CD4-positive, alpha-beta memory T cell (primary cell): ENCODE measurements at regions of chr7 and their contacts with region 1.

Region 1: DNA sequence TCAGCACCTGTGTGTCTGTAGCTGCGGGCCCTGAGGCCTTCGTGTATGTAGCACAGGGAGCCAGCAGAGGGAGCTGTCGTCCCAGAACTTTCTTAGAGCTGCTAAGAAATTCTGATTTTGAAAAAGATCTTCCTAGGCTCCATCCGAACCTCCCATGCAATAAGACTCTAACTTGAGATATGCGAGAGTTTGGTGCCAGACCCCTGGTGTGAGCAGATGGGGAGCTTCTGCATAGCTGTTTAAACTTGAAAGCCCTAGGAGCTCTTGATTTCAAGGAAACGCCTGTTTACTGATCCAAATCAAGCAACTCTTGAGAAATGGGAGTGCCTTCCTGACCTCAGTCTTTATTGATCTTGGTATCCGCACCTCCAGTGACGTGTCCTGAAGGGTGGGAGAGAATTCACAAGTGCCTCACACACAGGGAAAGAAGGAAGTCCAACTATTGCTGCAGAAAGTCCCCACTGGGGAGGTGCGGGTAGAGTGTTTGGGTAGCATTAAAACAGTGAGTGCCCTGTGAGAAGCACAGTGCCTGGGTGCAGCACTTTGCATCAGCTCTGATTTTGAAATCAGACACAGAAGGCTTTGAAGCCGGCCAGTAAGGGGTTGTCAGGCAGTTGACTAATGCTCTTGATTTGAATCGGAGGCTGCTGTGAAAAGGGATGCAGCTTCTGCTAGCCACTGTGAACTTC is 66.4 kb upstream of the STRIP2 start:
- DNase-seq: peak; percentile 61 to 68 (median 68)
- H3K4me3 ChIP-seq: peak overlapping the region in 1 of 2 donors; percentile 32
- H3K4me3 Mint-ChIP-seq: peak overlapping the region; percentile 30 to 79 (median 63)
- H3K27ac ChIP-seq: peak overlapping the region; percentile 0
- H3K27ac Mint-ChIP-seq: peak overlapping the region in 4 of 7 donors; percentile 9 to 78 (median 56)
- H3K4me1 ChIP-seq: peaks cover 17% of the 10 kb centered on the region
- H3K4me1 Mint-ChIP-seq: peaks cover 13 to 20% (median 16%) of the 10 kb centered on the region in 4 donors
- H3K27me3 ChIP-seq: no peaks in the 10 kb centered on the region
- H3K27me3 Mint-ChIP-seq: no peaks in the 10 kb centered on the region

Region 2: GRCh38 chr7:129343099-129343700 is 24.6 kb before region 1 on chr7:
- CTCF ChIA-PET with region 1: interaction called, 17 read pairs
- POLR2A ChIA-PET with region 1: no interaction called
- intact Hi-C with region 1: no loop called
- DNase-seq: peak in 4 of 5 donors; percentile 17 to 44 (median 34)
- H3K4me3 ChIP-seq: no peak overlapping the region
- H3K4me3 Mint-ChIP-seq: no peak overlapping the region
- H3K27ac ChIP-seq: no peak overlapping the region
- H3K27ac Mint-ChIP-seq: no peak overlapping the region
- H3K4me1 ChIP-seq: no peaks in the 10 kb centered on the region
- H3K4me1 Mint-ChIP-seq: peaks cover 9 to 12% (median 10%) of the 10 kb centered on the region in 4 donors
- H3K27me3 ChIP-seq: no peaks in the 10 kb centered on the region
- H3K27me3 Mint-ChIP-seq: no peaks in the 10 kb centered on the region

Region 3: GRCh38 chr7:129401967-129402860 is 34.4 kb after region 1 on chr7:
- CTCF ChIA-PET with region 1: interaction called, 10 read pairs
- POLR2A ChIA-PET with region 1: no interaction called
- intact Hi-C with region 1: no loop called
- DNase-seq: no peak
- H3K4me3 ChIP-seq: no peak overlapping the region
- H3K4me3 Mint-ChIP-seq: no peak overlapping the region
- H3K27ac ChIP-seq: no peak overlapping the region
- H3K27ac Mint-ChIP-seq: no peak overlapping the region
- H3K4me1 ChIP-seq: no peaks in the 10 kb centered on the region
- H3K4me1 Mint-ChIP-seq: no peaks in the 10 kb centered on the region
- H3K27me3 ChIP-seq: no peaks in the 10 kb centered on the region
- H3K27me3 Mint-ChIP-seq: no peaks in the 10 kb centered on the region

Region 4: GRCh38 chr7:129468087-129468486 is 100.2 kb after region 1 on chr7:
- CTCF ChIA-PET with region 1: interaction called, 136 read pairs
- POLR2A ChIA-PET with region 1: no interaction called
- intact Hi-C with region 1: loop called (anchors 1 kb)
- DNase-seq: no peak
- H3K4me3 ChIP-seq: no peak overlapping the region
- H3K4me3 Mint-ChIP-seq: no peak overlapping the region
- H3K27ac ChIP-seq: no peak overlapping the region
- H3K27ac Mint-ChIP-seq: no peak overlapping the region
- H3K4me1 ChIP-seq: no peaks in the 10 kb centered on the region
- H3K4me1 Mint-ChIP-seq: no peaks in the 10 kb centered on the region
- H3K27me3 ChIP-seq: no peaks in the 10 kb centered on the region
- H3K27me3 Mint-ChIP-seq: no peaks in the 10 kb centered on the region

Region 5: DNA sequence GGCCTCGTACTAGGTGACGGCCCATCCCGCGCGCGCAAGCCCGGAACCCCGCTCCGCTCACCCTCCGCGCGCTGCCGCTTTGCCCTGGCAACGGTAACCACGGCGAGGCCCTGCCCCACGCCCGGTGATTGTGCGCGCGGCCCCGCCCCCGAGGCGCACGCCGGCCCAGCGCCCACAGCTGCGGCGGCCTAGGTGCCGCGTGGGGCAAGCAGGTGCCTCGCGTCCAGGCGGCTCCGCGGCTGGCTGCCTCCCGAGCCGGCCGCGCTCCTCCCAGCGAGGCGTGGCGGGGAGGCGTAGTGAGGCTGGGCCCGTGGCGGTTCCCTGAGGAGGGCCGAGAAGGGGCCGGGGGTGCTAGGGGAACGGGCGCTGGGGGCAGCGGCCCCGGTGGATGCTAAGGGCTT is 134.5 kb after region 1 on chr7 and contains the start of gene SMKR1:
- CTCF ChIA-PET with region 1: no interaction called
- POLR2A ChIA-PET with region 1: no interaction called
- intact Hi-C with region 1: no loop called
- DNase-seq: peak; percentile 93 to 96 (median 96)
- H3K4me3 ChIP-seq: peak within 1 kb of the TSS; percentile 18 to 55
- H3K4me3 Mint-ChIP-seq: peak within 1 kb of the TSS; percentile 85 to 91 (median 88)
- H3K27ac ChIP-seq: peak within 1 kb of the TSS; percentile 66
- H3K27ac Mint-ChIP-seq: peak within 1 kb of the TSS; percentile 87 to 97 (median 93)
- H3K4me1 ChIP-seq: peaks cover 6% of the 10 kb centered on the region
- H3K4me1 Mint-ChIP-seq: peaks cover 6 to 18% (median 12%) of the 10 kb centered on the region in 4 donors
- H3K27me3 ChIP-seq: no peaks in the 10 kb centered on the region
- H3K27me3 Mint-ChIP-seq: no peaks in the 10 kb centered on the region
- total RNA-seq, gene SMKR1: 1.2 to 1.5 TPM

Region 6: GRCh38 chr7:129644634-129645230 is 276.9 kb after region 1 on chr7:
- CTCF ChIA-PET with region 1: interaction called, 8 read pairs
- POLR2A ChIA-PET with region 1: no interaction called
- intact Hi-C with region 1: loop called (anchors 2 kb)
- DNase-seq: peak in 1 of 5 donors; percentile 16
- H3K4me3 ChIP-seq: no peak overlapping the region
- H3K4me3 Mint-ChIP-seq: no peak overlapping the region
- H3K27ac ChIP-seq: no peak overlapping the region
- H3K27ac Mint-ChIP-seq: no peak overlapping the region
- H3K4me1 ChIP-seq: no peaks in the 10 kb centered on the region
- H3K4me1 Mint-ChIP-seq: peaks cover 19 to 33% (median 20%) of the 10 kb centered on the region in 4 donors
- H3K27me3 ChIP-seq: no peaks in the 10 kb centered on the region
- H3K27me3 Mint-ChIP-seq: no peaks in the 10 kb centered on the region

Region 7: DNA sequence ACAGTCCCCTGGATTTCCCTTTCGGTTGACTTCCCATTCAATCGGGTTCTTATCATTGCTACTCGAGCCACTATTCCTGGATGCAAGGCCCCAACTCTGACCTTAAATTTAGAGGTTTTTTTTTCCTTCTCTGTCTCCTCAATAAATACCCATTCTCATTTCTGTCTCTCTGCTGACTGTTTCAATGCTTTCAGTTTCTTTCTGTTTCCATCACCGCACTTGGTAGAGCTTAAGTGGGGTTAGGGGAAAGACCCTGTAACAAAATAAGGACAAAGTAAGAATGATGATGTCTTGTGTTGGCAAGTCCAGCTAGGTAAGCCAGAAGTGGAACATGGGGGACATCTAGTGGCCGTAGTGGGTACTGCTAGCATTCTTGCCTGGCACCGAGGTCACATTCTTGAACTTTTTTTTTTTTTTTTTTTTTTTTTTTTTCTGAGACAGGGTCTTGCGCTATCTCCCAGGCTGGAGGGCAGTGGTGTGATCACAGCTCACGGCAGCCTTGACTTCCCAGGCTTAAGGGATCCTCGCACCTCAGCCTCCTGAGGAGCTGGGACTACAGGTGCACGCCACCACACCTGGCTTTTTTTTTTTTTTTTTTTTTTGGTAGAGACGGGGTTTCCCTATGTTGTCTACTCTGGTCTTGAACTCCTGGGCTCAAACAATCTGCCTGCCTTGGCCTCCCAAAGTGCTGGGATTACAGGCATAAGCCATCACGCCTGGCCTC is 643.0 kb after region 1 on chr7:
- CTCF ChIA-PET with region 1: interaction called, 15 read pairs
- POLR2A ChIA-PET with region 1: interaction called, 3 read pairs
- intact Hi-C with region 1: loop called (anchors 1 kb)
- DNase-seq: peak; percentile 79 to 83 (median 80)
- H3K4me3 ChIP-seq: no peak overlapping the region
- H3K4me3 Mint-ChIP-seq: no peak overlapping the region
- H3K27ac ChIP-seq: no peak overlapping the region
- H3K27ac Mint-ChIP-seq: peak overlapping the region in 3 of 7 donors; percentile 62 to 74 (median 65)
- H3K4me1 ChIP-seq: no peaks in the 10 kb centered on the region
- H3K4me1 Mint-ChIP-seq: peaks cover 0 to 4% (median 2%) of the 10 kb centered on the region in 4 donors
- H3K27me3 ChIP-seq: no peaks in the 10 kb centered on the region
- H3K27me3 Mint-ChIP-seq: no peaks in the 10 kb centered on the region